ENCODE measurements at regions of chr1 and their contacts with region 1.

Region 1: DNA sequence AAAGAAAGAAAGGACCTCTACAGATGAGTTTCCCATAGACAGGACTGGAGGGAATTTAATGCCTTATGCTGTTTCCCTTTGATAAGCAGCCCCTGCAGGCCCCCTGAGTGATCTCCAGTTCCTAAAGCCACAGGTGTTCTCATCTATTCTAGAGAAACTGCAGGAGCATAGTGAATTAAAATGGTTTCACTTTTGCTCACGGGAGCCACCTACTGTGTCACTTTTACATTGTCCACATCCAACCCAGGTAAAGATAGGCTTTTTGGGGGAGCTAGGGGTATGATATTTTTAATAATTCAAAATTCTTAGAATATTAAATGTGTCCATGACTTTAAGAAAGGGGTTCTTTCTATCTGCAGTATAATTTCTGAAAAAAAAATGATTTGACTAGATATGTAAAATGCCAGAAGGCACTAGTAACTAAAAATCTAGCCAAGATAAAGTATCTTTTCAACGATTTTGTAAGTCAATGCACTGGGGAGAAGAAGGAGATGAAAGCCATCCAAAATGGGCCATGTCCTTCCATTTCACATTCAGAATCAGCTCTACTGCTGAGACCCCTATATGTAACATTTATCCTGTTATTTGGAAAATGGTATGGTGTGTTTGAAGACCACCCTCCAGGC is 267.3 kb upstream of the DUSP10 start:
- DNase-seq: peak; percentile 47
- ATAC-seq: peak; percentile 71
- H3K4me3 Mint-ChIP-seq: no peak overlapping the region
- H3K27ac Mint-ChIP-seq: no peak overlapping the region
- H3K4me1 Mint-ChIP-seq: no peaks in the 10 kb centered on the region
- H3K27me3 Mint-ChIP-seq: peaks cover 7% of the 10 kb centered on the region

Region 2: DNA sequence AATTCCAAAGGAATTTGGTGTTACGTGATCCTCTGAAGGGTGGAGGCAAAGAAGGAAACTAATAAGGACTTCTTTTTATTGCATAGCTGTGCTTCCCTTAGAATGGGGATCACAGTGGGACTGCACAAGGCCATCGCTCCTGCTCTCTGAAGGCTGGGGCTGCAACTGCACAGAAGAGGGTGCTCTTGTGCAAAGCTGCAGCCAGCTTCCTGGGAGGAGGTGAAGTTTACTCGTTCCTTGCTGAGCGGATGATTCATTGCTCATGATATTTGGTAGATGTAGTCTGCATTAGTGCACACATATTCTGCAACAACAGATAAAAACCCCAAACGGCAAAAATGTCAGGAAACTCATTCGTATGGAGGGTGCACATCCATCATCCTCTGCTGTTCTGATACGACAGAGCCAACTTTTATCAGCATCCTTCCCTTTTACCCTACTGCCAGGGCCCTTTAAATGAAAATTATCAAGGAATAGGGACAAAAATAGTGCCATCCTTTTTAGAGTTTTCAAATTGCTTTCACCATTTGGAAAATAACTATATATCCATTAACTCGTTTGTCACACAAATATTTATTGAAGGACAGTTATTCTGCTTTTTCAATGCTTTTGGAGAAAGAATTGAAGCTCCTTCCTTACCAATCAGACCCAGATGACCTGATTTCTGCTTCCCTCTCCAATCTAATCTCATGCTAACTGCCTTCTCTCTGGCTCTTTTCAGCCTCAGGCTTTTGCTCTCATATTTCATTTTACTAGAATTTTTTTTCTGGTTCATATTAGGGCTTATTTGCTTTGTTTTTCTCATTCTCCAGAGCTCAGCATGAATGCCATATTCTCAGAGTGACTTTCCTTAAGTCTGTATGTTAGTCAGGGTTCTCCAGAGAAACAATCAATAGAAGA is 530.9 kb before region 1 on chr1:
- CTCF ChIA-PET with region 1: interaction called, 6 read pairs
- POLR2A ChIA-PET with region 1: no interaction called
- intact Hi-C with region 1: loop called (anchors 2 kb)
- DNase-seq: peak; percentile 78
- ATAC-seq: peak; percentile 99
- H3K4me3 Mint-ChIP-seq: no peak overlapping the region
- H3K27ac Mint-ChIP-seq: no peak overlapping the region
- H3K4me1 Mint-ChIP-seq: no peaks in the 10 kb centered on the region
- H3K27me3 Mint-ChIP-seq: peaks cover 7% of the 10 kb centered on the region

Region 3: DNA sequence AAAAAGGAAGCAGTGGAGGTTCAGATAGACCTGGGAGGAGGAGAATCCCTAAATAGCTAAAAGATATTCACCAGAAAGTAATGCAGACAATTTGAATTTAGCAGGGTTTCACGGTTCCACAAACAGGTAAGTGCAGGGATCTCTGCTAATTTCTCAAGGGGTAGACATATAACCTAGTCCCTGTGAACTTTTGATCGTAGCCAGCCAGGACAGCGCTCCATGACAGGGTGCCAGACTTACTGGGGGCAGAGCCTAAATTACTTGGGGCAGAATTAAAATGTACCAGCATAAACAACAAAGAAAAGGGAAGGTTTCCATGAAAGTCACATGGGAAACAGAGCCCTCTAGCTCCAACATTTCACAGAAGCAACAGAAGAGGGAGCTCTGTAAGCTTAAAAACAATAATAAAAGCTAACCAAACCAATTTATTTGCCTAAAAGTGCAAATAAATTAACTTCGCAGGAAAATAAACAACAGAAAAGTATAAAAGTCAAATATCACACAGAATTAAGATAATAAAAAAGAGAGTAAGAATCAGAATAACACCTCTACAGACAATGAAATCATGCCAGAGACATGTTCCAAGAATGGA is 465.6 kb before region 1 on chr1:
- CTCF ChIA-PET with region 1: interaction called, 5 read pairs
- POLR2A ChIA-PET with region 1: no interaction called
- intact Hi-C with region 1: loop called in 1 of 2 experiments (anchors 2 kb)
- DNase-seq: no peak
- ATAC-seq: no peak
- H3K4me3 Mint-ChIP-seq: no peak overlapping the region
- H3K27ac Mint-ChIP-seq: no peak overlapping the region
- H3K4me1 Mint-ChIP-seq: no peaks in the 10 kb centered on the region
- H3K27me3 Mint-ChIP-seq: peaks cover 9% of the 10 kb centered on the region

Region 4: DNA sequence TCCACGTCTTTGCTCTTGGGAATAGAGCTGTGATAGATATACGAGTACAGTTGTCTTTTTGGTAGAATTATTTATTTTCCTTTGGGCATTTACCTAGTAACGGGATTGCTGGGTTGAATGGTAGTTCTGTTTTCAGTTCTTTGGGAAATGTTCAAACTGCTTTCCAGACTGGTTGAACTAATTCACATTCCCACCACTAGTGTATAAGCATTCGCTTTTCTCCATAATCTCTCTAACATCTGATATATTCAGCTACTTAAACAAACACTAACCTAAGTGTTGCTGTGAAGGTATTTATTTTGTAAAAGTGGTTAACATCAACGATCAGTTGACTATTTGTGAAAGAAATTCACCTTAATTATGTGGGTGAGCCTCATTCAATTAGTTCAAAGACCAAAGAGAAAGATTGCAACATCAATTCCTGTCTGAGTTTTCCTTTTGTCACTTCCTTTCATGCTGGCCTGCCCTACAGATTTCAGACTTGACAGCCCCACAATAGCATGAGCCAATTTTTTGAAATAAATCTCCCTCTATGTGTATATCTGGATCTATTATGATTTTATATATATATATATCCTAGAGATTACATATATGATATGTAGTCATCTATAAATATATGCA is 240.7 kb before region 1 on chr1:
- CTCF ChIA-PET with region 1: no interaction called
- POLR2A ChIA-PET with region 1: no interaction called
- intact Hi-C with region 1: no loop called
- DNase-seq: no peak
- ATAC-seq: no peak
- H3K4me3 Mint-ChIP-seq: no peak overlapping the region
- H3K27ac Mint-ChIP-seq: no peak overlapping the region
- H3K4me1 Mint-ChIP-seq: peaks cover 6% of the 10 kb centered on the region
- H3K27me3 Mint-ChIP-seq: no peaks in the 10 kb centered on the region